SK-N-SH (cell line): ENCODE measurements at regions of chr22 and their contacts with region 1.

Region 1: DNA sequence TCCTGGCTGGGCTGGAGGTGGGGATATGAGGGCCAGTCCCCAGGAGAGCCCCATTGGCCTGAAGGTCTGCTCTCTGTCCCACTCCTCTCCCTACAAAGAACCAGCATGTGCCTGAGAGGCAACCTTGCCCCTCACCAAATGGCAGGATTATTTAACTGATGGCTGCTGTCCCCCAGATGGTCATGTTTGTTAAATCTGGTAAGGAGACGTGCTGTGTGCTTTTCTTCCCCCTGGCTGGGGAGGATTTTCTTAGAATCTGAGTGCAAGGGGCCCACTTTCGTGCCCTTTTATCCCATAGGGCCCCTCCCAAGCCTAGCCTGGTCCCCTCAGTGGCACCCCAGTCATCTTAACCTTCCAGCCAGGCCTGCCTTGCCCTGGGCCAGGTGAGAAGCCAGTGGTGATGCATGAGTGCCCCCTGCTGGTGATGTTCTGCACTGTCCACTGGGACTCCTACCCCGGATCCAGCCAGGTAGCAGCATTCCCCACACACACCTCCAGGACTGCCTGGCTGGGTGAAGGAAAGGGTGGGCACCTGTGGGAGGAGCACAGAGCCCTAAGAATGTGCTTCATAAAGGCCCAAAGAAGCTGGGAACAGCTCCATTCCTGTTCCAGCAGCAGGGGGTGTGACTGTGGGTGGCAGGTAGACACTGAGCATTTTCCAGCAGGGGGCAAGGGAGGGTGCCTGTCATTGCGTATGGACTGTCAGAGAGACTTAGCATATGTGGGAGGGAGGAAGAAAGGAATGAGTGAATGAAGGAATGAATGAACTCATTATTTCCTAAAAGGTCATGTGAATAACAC is 28.9 kb downstream of the MFNG start:
- DNase-seq: peak; percentile 85
- H3K4me3 ChIP-seq: no peak overlapping the region; a peak in 1 of 4 replicates
- H3K27ac ChIP-seq: no peak overlapping the region
- H3K4me1 ChIP-seq: peaks cover 8 to 16% of the 10 kb centered on the region in 2 experiments; a peak in 2 of 4 replicates
- H3K27me3 ChIP-seq: no peaks in the 10 kb centered on the region
- CTCF ChIP-seq: peak; percentile 96
- EP300 ChIP-seq: no peak
- RAD21 ChIP-seq: peak; percentile 98

Region 2: GRCh38 chr22:37300551-37301017 is 156.7 kb before region 1 on chr22:
- CTCF ChIA-PET with region 1: interaction called, 11 read pairs
- POLR2A ChIA-PET with region 1: no interaction called
- DNase-seq: no peak
- H3K4me3 ChIP-seq: no peak overlapping the region
- H3K27ac ChIP-seq: no peak overlapping the region
- H3K4me1 ChIP-seq: peaks cover 3 to 15% of the 10 kb centered on the region in 2 experiments; a peak in 3 of 4 replicates
- H3K27me3 ChIP-seq: no peaks in the 10 kb centered on the region
- CTCF ChIP-seq: no peak
- EP300 ChIP-seq: no peak
- RAD21 ChIP-seq: no peak

Region 3: DNA sequence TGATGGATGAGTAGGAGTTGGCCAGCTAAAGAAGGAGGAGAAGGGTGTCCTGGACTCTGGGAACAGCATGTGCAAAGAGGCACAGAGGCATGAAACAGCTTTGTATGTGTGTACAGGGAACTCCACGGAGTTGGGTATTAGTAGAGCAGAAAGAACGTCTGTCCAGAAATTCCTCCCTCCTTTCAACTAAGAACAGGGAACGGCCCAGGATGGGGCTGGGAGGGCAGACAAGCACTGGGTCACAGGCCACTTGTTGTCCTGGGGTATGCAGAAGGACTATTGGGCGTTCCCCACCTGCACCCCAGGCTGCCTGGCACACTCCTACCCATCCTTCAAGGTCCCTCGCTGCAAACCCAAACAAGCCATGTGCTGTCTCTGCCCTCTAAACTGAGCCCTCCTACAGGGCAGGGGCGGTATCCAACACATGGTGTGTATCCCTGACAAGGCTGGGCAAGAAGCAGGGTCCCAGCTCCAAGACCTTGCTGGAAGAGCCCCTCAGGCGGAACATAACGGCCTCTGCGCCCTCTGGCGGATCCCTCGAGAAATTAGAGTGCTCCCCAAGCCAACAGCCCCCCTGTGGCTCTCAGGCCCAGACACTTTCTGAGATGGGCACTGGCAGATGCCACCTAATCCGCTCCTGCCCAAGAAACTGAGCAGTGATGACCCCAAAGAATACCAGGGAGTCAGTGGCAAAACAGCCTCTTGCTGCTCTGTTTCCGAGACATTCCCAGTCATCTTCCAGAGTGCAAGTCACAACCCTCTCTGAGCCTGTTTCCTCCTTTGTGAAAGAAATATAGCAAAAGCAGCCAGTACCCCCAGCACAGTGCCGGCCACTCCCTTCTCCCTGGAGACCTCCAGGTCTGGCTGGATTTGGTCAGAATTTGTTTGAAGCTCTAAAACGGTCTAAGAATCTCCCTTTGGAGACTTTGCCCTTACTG is 28.4 kb before region 1 on chr22:
- CTCF ChIA-PET with region 1: interaction called, 33 read pairs
- POLR2A ChIA-PET with region 1: no interaction called
- DNase-seq: peak; percentile 88
- H3K4me3 ChIP-seq: no peak overlapping the region; a peak in 1 of 4 replicates
- H3K27ac ChIP-seq: no peak overlapping the region
- H3K4me1 ChIP-seq: peaks cover 0 to 6% of the 10 kb centered on the region in 2 experiments; a peak in 1 of 4 replicates
- H3K27me3 ChIP-seq: no peaks in the 10 kb centered on the region; the same call in 1 of the 2 replicates
- CTCF ChIP-seq: peak; percentile 89
- EP300 ChIP-seq: no peak
- RAD21 ChIP-seq: peak; percentile 71

Region 4: GRCh38 chr22:37472418-37473006 is 15.2 kb after region 1 on chr22:
- CTCF ChIA-PET with region 1: interaction called, 14 read pairs
- POLR2A ChIA-PET with region 1: no interaction called
- DNase-seq: peak; percentile 75
- H3K4me3 ChIP-seq: no peak overlapping the region
- H3K27ac ChIP-seq: no peak overlapping the region
- H3K4me1 ChIP-seq: no peaks in the 10 kb centered on the region; a peak in 1 of 4 replicates
- H3K27me3 ChIP-seq: no peaks in the 10 kb centered on the region
- CTCF ChIP-seq: peak; percentile 63
- EP300 ChIP-seq: no peak
- RAD21 ChIP-seq: peak; percentile 53

Region 5: DNA sequence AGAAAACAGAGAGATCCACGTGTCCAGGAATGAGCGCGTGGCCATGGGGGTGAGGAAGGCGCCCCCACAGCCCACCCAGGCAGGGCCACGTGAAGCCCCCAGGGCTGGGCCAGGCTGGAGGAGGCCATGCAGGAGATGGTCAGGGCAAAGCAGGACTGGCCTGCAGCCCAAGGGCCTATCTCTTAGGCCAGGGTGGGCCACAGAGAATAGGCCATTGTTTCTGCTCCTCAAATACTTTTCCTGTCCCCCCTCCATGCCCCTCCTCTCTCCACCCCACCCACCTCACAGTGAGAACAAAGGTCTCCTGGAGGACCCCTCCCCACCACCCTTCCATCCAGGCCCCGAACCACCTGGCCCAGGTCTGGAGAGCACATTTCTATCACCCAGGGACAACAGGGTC is 94.7 kb after region 1 on chr22:
- CTCF ChIA-PET with region 1: no interaction called
- POLR2A ChIA-PET with region 1: no interaction called
- DNase-seq: peak; percentile 27
- H3K4me3 ChIP-seq: no peak overlapping the region
- H3K27ac ChIP-seq: no peak overlapping the region
- H3K4me1 ChIP-seq: no peaks in the 10 kb centered on the region; a peak in 1 of 4 replicates
- H3K27me3 ChIP-seq: no peaks in the 10 kb centered on the region
- CTCF ChIP-seq: no peak
- EP300 ChIP-seq: no peak
- RAD21 ChIP-seq: no peak